Aorta (tissue), 5 donors: ENCODE measurements at regions of chr10 and their contacts with region 1.

Region 1: GRCh38 chr10:99172130-99172738 is 63.4 kb downstream of the HPSE2 start:
- DNase-seq: peak in 1 of 2 donors; percentile 50
- ATAC-seq: no peak
- H3K4me3 ChIP-seq: no peak overlapping the region
- H3K27ac ChIP-seq: no peak overlapping the region
- H3K4me1 ChIP-seq: no peaks in the 10 kb centered on the region
- H3K27me3 ChIP-seq: no peaks in the 10 kb centered on the region

Region 2: DNA sequence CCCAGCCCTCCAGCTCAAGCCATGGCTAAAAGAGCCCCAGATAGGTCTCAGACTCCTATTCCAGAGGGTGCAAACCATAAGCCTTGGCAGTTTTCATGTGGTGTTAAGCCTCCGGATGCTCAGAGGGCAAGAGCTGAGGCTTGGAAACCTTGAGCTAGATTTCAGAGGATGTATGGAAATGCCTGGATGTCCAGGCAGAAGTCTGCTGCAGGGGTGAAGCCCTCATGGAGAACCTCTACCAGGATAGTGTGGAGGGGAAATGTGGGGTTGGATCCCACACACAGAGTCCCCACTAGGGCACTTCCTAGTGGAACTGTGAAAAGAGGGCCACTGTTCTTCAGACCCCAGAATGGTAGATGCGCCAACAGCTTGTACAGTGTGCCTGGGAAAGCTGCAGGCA is 76.6 kb after region 1 on chr10:
- intact Hi-C with region 1: loop called in 1 of 2 experiments (anchors 10 kb)
- DNase-seq: no peak
- ATAC-seq: no peak
- H3K4me3 ChIP-seq: no peak overlapping the region
- H3K27ac ChIP-seq: no peak overlapping the region
- H3K4me1 ChIP-seq: no peaks in the 10 kb centered on the region
- H3K27me3 ChIP-seq: no peaks in the 10 kb centered on the region